Activated T-helper 2 cell treated with anti-CD3 and anti-CD28 coated beads, Interferon-gamma antibody, Interleukin-2, Interleukin-4, amounts not matched to agents 10 μg/mL and 5 μg/mL and 100 μg/mL, durations not matched to agents 14 hours and 24 hours and 36 hours (primary cell): ENCODE measurements at regions of chr13 and their contacts with region 1.

Region 1: GRCh38 chr13:31199849-31200636 is at the start of gene B3GLCT:
- DNase-seq: peak; percentile 77
- H3K4me3 Mint-ChIP-seq: peak within 1 kb of the TSS; percentile 81
- H3K27ac Mint-ChIP-seq: peak within 1 kb of the TSS; percentile 75
- H3K4me1 Mint-ChIP-seq: peaks cover 35% of the 10 kb centered on the region
- H3K27me3 Mint-ChIP-seq: peaks cover 21% of the 10 kb centered on the region
- total RNA-seq, gene B3GLCT: 4.3 and 4.7 TPM in 2 replicates

Region 2: GRCh38 chr13:30915691-30916541 is 284.1 kb before region 1 on chr13:
- intact Hi-C with region 1: no loop called
- DNase-seq: no peak
- H3K4me3 Mint-ChIP-seq: no peak overlapping the region
- H3K27ac Mint-ChIP-seq: no peak overlapping the region
- H3K4me1 Mint-ChIP-seq: no peaks in the 10 kb centered on the region
- H3K27me3 Mint-ChIP-seq: peaks cover 46% of the 10 kb centered on the region

Region 3: DNA sequence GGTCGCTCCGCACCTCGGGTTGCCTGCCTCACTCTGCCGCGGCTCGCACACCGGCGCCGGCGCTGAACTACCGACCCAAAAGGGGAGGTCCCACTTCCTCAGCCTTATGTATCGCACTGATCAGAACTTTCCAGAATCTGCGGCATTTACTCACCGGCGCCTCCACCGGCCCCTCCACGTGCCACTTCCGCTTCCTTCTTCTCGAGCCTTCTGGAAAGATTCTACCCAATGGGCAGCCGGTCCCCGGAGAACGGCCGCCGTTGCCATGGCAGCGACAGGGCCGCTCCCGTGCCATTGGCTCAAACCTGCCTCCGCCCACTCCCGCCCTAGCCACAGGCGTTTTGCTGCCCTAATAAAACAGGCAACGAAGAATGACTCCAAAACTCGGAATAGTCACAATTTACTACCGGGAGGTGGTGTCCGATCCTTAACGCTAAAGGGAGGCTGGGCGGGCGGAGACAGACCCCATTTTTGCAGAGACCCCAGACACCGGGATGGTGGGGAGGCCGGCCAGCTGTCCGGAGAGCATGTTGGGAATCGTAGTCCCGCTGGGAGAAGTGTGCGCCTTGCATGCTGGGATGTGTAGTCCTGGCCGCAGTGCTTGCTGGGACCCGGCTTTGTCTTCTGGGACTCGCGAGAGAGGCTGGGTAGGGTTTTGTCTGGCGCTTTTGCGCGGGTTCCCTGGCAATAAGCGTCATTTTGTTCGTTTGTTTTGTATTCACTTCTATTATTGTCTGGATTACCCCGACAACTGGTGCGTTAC is 38.0 kb before region 1 on chr13 and contains the start of gene HSPH1:
- intact Hi-C with region 1: loop called (anchors 1 kb)
- DNase-seq: peak; percentile 98
- H3K4me3 Mint-ChIP-seq: peak within 1 kb of the TSS; percentile 95
- H3K27ac Mint-ChIP-seq: peak within 1 kb of the TSS; percentile 97
- H3K4me1 Mint-ChIP-seq: peaks cover 41% of the 10 kb centered on the region
- H3K27me3 Mint-ChIP-seq: no peaks in the 10 kb centered on the region
- total RNA-seq, gene HSPH1: 269 and 274 TPM in 2 replicates

Region 4: GRCh38 chr13:31213651-31214289 is 13.7 kb after region 1 on chr13:
- intact Hi-C with region 1: loop called (anchors 1 kb)
- DNase-seq: no peak
- H3K4me3 Mint-ChIP-seq: no peak overlapping the region
- H3K27ac Mint-ChIP-seq: peak overlapping the region; percentile 76
- H3K4me1 Mint-ChIP-seq: peaks cover 12% of the 10 kb centered on the region
- H3K27me3 Mint-ChIP-seq: no peaks in the 10 kb centered on the region

Region 5: GRCh38 chr13:31424117-31424729 is 224.2 kb after region 1 on chr13:
- intact Hi-C with region 1: loop called (anchors 10 kb)
- DNase-seq: peak; percentile 33
- H3K4me3 Mint-ChIP-seq: no peak overlapping the region
- H3K27ac Mint-ChIP-seq: no peak overlapping the region
- H3K4me1 Mint-ChIP-seq: no peaks in the 10 kb centered on the region
- H3K27me3 Mint-ChIP-seq: peaks cover 14% of the 10 kb centered on the region